Naive thymus-derived CD4-positive, alpha-beta T cell (primary cell): ENCODE measurements at regions of chr15 and their contacts with region 1.

Region 1: GRCh38 chr15:48250640-48251076 is 44.6 kb downstream of the SLC12A1 start:
- DNase-seq: peak in 2 of 9 donors; percentile 1 to 9
- ATAC-seq: peak; percentile 22
- H3K4me3 ChIP-seq: no peak overlapping the region
- H3K4me3 Mint-ChIP-seq: no peak overlapping the region
- H3K27ac ChIP-seq: no peak overlapping the region
- H3K27ac Mint-ChIP-seq: peak overlapping the region in 1 of 9 donors; percentile 3
- H3K4me1 ChIP-seq: no peaks in the 10 kb centered on the region
- H3K4me1 Mint-ChIP-seq: peaks cover 0 to 2% (median 0%) of the 10 kb centered on the region in 7 donors
- H3K27me3 ChIP-seq: no peaks in the 10 kb centered on the region
- H3K27me3 Mint-ChIP-seq: peaks cover 3 to 41% (median 31%) of the 10 kb centered on the region in 5 donors

Region 2: DNA sequence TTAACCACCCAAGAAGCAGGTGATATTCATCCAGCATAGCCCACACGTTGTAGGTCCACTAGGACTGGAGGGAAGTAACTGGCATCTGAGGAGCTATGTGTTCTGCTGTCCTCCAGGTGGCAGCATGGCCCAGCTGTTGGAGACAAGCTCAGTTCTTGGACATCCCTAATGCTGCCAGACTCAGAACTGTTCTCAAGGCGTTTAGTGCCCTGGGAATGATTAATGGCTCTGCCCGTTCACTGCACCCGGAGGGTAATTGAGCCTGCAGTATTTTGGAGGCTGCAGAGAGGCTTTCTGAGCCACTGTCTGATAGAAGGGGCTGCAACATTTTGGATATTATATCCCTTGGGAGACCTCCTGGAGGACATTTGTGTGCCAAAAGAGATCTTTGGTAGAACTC is 1054.6 kb before region 1 on chr15:
- CTCF ChIA-PET with region 1: no interaction called
- POLR2A ChIA-PET with region 1: no interaction called
- intact Hi-C with region 1: loop called in 1 of 2 experiments (anchors 10 kb)
- DNase-seq: peak in 7 of 9 donors; percentile 9 to 34 (median 19)
- ATAC-seq: peak; percentile 57
- H3K4me3 ChIP-seq: no peak overlapping the region
- H3K4me3 Mint-ChIP-seq: no peak overlapping the region
- H3K27ac ChIP-seq: no peak overlapping the region
- H3K27ac Mint-ChIP-seq: no peak overlapping the region
- H3K4me1 ChIP-seq: no peaks in the 10 kb centered on the region
- H3K4me1 Mint-ChIP-seq: no peaks in the 10 kb centered on the region
- H3K27me3 ChIP-seq: no peaks in the 10 kb centered on the region
- H3K27me3 Mint-ChIP-seq: peaks cover 2 to 31% (median 8%) of the 10 kb centered on the region in 5 donors

Region 3: GRCh38 chr15:48233246-48233645 is 17.4 kb before region 1 on chr15:
- CTCF ChIA-PET with region 1: no interaction called
- POLR2A ChIA-PET with region 1: no interaction called
- intact Hi-C with region 1: no loop called
- DNase-seq: no peak
- ATAC-seq: no peak
- H3K4me3 ChIP-seq: no peak overlapping the region
- H3K4me3 Mint-ChIP-seq: no peak overlapping the region
- H3K27ac ChIP-seq: no peak overlapping the region
- H3K27ac Mint-ChIP-seq: no peak overlapping the region
- H3K4me1 ChIP-seq: no peaks in the 10 kb centered on the region
- H3K4me1 Mint-ChIP-seq: no peaks in the 10 kb centered on the region
- H3K27me3 ChIP-seq: no peaks in the 10 kb centered on the region
- H3K27me3 Mint-ChIP-seq: peaks cover 0 to 11% (median 8%) of the 10 kb centered on the region in 5 donors